ENCODE measurements at regions of chr7 and their contacts with region 1.

Region 1: DNA sequence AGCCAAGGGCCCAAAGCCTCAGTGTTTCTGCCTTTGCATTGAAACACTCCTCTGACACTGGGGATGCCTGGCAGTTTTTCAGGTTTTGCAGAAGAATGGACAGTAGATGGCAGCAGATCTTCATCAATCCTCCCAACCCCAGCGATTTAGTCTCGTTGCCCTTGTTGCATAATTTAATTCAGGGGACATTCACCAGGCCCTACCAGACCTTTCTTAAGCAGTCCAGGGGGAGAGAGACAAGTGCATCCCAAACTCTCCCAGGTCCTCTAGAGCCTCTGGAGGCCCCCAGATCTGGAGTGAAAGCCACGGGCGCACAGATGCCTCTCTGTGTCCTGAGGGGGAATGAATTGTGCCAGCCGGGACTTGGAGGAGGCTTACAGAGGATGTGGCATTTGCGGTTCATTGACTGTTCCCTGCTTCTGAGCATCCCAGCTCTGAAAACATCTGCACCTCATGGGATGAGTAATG is 29.6 kb downstream of the MINDY4 start:
- DNase-seq: peak; percentile 29
- ATAC-seq: peak; percentile 83
- H3K4me3 ChIP-seq: no peak overlapping the region
- H3K27ac ChIP-seq: no peak overlapping the region
- H3K4me1 ChIP-seq: peaks cover 0 to 12% of the 10 kb centered on the region in 2 experiments; a peak in 3 of 4 replicates
- H3K27me3 ChIP-seq: no peaks in the 10 kb centered on the region
- CTCF ChIP-seq: peak; percentile 66 to 77 (median 73)
- POLR2A ChIP-seq: no peak
- RAD21 ChIP-seq: peak; percentile 90

Region 2: DNA sequence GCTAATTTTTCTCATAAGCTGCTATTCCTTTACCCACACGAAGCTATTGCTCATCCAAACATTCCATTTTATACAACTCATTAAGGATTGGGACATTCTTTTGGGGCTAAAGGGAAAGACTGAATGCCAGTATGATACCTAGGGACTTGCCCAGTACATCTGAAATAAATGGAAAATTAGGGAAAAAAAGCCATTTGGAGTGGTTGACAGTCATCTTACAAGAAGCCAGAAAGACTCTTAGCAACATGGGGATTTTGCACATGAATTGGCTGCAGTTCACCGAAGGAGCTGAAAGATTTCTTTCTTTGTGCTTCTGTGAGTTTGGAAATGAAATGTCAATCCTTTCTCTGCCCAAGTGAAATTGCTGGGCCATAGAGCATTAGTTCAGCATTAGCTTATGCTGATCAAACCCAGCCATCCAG is 709.3 kb before region 1 on chr7:
- CTCF ChIA-PET with region 1: no interaction called
- POLR2A ChIA-PET with region 1: no interaction called
- RAD21 ChIA-PET with region 1: no interaction called
- intact Hi-C with region 1: no loop called
- DNase-seq: no peak
- ATAC-seq: no peak
- H3K4me3 ChIP-seq: no peak overlapping the region
- H3K27ac ChIP-seq: no peak overlapping the region
- H3K4me1 ChIP-seq: peaks cover 0 to 5% of the 10 kb centered on the region in 2 experiments; a peak in 1 of 4 replicates
- H3K27me3 ChIP-seq: no peaks in the 10 kb centered on the region
- CTCF ChIP-seq: no peak
- POLR2A ChIP-seq: no peak
- RAD21 ChIP-seq: no peak

Region 3: DNA sequence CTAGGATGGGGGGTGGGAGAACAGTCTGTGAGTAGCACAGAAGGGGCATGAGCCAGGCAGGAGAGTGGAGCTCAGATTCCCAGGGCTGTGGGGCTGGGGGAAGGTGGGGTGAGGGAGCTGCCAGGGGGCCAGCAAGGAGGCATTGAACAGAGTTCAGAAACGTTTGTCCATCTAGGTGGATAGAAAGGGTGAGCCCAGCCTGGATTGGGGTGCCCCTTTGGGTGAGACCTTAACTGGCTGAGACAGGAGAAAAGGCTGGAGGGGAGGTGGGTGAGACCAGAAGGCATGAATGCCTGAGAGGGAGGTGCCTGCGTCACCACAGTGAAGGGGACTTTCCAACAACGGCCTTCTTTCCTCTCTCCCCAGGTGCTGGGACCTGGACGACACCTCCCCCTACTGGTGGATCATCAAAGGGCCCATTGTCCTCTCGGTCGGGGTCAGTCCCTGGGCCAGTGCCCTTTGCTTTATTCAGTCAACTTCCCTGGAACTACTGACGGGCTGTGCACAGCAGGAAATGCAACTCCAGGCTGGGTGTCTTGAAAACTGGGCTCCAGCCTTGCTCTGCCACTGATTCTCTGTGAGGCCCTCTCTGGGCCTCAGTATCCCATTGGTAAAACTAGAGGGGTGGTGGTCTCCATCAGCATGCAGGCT is 173.9 kb after region 1 on chr7:
- CTCF ChIA-PET with region 1: interaction called, 5 read pairs
- POLR2A ChIA-PET with region 1: no interaction called
- RAD21 ChIA-PET with region 1: no interaction called
- intact Hi-C with region 1: loop called (anchors 1 kb)
- DNase-seq: peak; percentile 46
- ATAC-seq: peak; percentile 88
- H3K4me3 ChIP-seq: no peak overlapping the region
- H3K27ac ChIP-seq: no peak overlapping the region
- H3K4me1 ChIP-seq: peaks cover 0 to 7% of the 10 kb centered on the region in 2 experiments; a peak in 1 of 4 replicates
- H3K27me3 ChIP-seq: peaks cover 5% of the 10 kb centered on the region; the same call in 1 of the 2 replicates
- CTCF ChIP-seq: peak; percentile 72 to 89 (median 87)
- POLR2A ChIP-seq: no peak
- RAD21 ChIP-seq: peak; percentile 84